Mammary epithelial cell (primary cell): ENCODE measurements at regions of chr1 and their contacts with region 1.

Region 1: DNA sequence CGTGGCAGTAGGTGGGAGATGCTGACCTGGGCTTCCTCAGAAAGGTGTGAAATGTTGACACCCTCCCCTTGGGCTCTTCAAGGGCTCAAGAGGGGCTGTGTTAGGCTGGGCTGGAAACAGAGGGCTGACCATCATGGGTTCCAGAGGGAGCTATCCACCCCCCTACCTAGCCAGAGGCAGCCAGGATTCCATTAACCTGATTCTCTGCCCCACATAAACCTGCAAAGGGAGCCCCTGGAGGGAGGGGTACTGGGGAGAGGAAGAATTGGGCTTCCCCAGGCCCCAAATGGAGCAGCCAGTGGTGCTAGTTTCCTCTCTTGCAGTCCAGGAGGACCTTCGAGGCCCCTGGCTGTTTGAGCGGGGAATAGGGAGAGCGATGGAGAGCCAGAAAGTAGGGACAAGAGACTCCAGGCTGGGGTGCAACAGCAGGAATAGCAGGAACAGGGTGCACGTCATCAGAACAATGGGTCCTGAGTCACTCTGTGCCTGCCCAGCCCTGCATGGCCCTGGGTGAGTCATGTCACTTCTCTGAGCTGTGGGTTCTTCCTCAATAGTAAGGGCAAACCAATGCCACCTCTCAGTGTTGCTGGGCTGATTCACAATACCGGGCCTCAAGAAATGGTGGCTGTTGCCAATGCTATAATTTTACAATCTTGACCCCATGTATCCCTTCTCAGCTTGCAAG is 121.2 kb downstream of the EPHB2 start:
- DNase-seq: peak; percentile 98
- H3K4me3 ChIP-seq: no peak overlapping the region
- H3K27ac ChIP-seq: peak overlapping the region; percentile 81
- H3K4me1 ChIP-seq: peaks cover 63% of the 10 kb centered on the region
- H3K27me3 ChIP-seq: no peaks in the 10 kb centered on the region
- CTCF ChIP-seq: no peak

Region 2: GRCh38 chr1:22275721-22276395 is 556.0 kb before region 1 on chr1:
- CTCF ChIA-PET with region 1: no interaction called
- dilution Hi-C with region 1: no loop called
- in situ Hi-C with region 1: no loop called
- intact Hi-C with region 1: no loop called
- DNase-seq: peak; percentile 39
- H3K4me3 ChIP-seq: no peak overlapping the region
- H3K27ac ChIP-seq: no peak overlapping the region
- H3K4me1 ChIP-seq: peaks cover 8% of the 10 kb centered on the region
- H3K27me3 ChIP-seq: no peaks in the 10 kb centered on the region
- CTCF ChIP-seq: peak; percentile 76 to 93

Region 3: DNA sequence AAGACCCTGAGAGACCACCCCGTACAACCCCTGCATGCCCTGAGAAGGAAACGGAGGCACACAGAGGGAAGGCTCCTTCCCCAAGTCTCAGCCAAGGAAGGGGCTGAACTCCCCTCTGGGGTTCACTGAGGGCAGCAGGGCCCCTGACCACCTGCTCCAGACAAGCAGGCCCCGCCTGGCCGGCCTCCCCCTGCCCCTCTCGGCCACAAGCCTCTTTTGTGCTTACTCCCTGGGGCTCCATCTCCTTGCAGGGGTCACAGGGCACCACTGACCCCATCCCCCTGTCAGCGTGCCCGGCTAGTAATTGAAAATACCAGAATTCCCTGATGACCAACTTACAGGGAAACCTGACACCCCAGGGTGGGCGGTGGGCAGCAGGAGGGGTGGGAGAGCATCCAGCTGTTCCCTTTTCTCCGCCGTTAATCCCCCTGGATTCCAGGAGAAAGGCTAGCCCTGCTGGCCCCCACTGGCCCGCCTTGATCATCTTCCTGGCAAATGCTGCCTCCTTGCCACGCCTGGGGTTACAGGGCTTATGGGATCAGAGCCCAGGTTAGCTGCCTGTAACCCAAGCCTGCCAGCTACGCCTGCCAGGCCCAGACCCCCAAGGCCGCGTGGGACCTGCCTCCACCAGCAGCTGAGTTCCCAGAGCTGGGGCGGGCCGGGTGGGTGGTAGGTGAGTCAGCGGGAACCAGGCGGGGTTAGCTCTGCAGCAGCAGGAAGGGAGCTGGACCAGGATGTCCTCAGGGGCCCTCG is 44.7 kb after region 1 on chr1:
- CTCF ChIA-PET with region 1: no interaction called
- dilution Hi-C with region 1: no loop called
- in situ Hi-C with region 1: no loop called
- intact Hi-C with region 1: loop called (anchors 5 kb)
- DNase-seq: peak; percentile 31
- H3K4me3 ChIP-seq: no peak overlapping the region
- H3K27ac ChIP-seq: no peak overlapping the region
- H3K4me1 ChIP-seq: peaks cover 32% of the 10 kb centered on the region
- H3K27me3 ChIP-seq: no peaks in the 10 kb centered on the region
- CTCF ChIP-seq: no peak

Region 4: GRCh38 chr1:22952694-22953391 is 121.0 kb after region 1 on chr1:
- CTCF ChIA-PET with region 1: no interaction called
- dilution Hi-C with region 1: no loop called
- in situ Hi-C with region 1: no loop called
- intact Hi-C with region 1: no loop called
- DNase-seq: no peak
- H3K4me3 ChIP-seq: no peak overlapping the region
- H3K27ac ChIP-seq: no peak overlapping the region
- H3K4me1 ChIP-seq: peaks cover 3% of the 10 kb centered on the region
- H3K27me3 ChIP-seq: peaks cover 27% of the 10 kb centered on the region
- CTCF ChIP-seq: no peak